ENCODE measurements at regions of chr3 and their contacts with region 1.

Region 1: DNA sequence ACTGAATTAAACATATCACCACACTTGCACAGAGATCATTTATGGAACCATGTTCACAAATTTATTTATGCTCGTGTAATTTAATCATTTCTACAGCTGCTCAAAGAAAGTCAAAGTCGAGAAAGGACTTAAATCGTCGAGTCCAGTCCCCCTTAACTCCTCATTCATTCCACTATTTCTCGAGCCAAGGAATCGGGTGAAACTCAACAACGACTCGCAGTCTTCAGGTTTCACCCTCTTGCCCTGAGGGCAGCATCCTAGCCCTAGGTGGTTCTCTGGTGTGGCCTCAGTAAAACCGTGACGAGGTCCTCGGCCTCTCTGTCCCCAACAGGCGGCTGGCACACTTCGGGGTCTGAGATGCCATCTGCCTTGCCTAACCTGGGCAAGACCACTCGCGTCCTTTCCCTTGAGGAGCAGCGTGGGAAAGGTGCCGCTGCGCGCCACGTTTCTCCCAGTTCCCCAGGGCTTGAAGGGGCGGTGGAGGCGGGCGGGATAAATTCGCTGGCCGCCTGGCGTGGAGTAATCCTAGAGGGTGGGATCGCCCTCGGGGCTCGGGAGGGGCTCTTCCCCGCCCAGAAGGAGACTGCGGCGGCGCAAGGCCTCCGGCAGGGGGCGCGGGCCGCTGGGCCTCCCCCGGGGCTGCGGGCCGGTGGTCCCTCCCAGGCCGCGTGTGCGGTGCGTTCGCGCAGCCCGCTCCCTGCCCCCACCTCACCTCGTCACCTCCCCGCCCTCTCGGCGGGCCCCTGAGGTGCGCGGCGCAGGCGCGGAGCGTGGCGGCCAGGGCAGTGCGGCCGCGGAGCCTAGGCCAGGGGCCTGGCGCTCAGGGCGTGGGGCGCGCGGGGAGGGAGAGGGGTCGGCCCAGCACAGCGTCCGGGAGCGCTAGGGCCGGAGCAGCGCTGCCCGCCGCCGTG is at the start of gene ZNF639:
- DNase-seq: peak; percentile 74 to 88 (median 86)
- ATAC-seq: peak; percentile 86
- H3K4me3 ChIP-seq: peak within 1 kb of the TSS; percentile 45
- H3K4me1 ChIP-seq: peaks cover 16% of the 10 kb centered on the region
- CTCF ChIP-seq: peak; percentile 74
- total RNA-seq, gene ZNF639: 18.4 to 41.2 (median 22.9) TPM

Region 2: DNA sequence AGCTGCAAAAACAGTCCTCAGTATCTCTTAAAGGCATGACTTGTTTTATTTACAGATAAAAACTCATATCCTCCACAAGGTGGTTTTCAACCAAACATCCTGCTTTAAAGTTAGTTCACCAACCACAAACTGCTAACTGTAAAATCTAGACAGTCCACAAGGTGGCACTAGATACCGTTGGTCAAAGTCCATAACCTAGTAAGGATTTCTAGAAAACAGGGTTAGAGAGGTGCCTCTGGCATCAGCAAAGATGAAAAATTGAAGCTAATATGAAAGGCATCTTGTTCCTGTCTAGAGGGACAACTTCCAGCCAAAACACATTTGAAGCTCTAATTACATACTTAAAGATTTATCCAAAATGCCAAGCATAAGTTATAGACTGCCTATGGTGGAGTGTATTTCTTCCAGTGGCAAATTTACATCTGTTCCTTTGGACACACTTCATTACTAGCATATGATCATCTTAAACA is 307.0 kb before region 1 on chr3:
- intact Hi-C with region 1: loop called (anchors 5 kb)
- DNase-seq: peak in 1 of 3 donors; percentile 84
- ATAC-seq: peak; percentile 93
- H3K4me3 ChIP-seq: no peak overlapping the region
- H3K4me1 ChIP-seq: no peaks in the 10 kb centered on the region
- CTCF ChIP-seq: peak; percentile 68

Region 3: GRCh38 chr3:179105881-179106280 is 216.7 kb before region 1 on chr3:
- intact Hi-C with region 1: loop called in 1 of 2 experiments (anchors 2 kb)
- DNase-seq: no peak
- ATAC-seq: no peak
- H3K4me3 ChIP-seq: no peak overlapping the region
- H3K4me1 ChIP-seq: no peaks in the 10 kb centered on the region
- CTCF ChIP-seq: no peak

Region 4: GRCh38 chr3:179174316-179174715 is 148.2 kb before region 1 on chr3:
- intact Hi-C with region 1: no loop called
- DNase-seq: no peak
- ATAC-seq: no peak
- H3K4me3 ChIP-seq: no peak overlapping the region
- H3K4me1 ChIP-seq: no peaks in the 10 kb centered on the region
- CTCF ChIP-seq: no peak

Region 5: GRCh38 chr3:179347345-179348194 is 25.0 kb after region 1 on chr3 and contains the start of gene MFN1:
- intact Hi-C with region 1: loop called in 1 of 2 experiments (anchors 2 kb)
- DNase-seq: peak; percentile 94 to 96 (median 96)
- ATAC-seq: peak; percentile 98
- H3K4me3 ChIP-seq: peak within 1 kb of the TSS; percentile 83
- H3K4me1 ChIP-seq: peaks cover 17% of the 10 kb centered on the region
- CTCF ChIP-seq: no peak
- total RNA-seq, gene MFN1: 55.2 to 68.4 (median 61.8) TPM